ENCODE measurements at regions of chr2 and their contacts with region 1.

Region 1: DNA sequence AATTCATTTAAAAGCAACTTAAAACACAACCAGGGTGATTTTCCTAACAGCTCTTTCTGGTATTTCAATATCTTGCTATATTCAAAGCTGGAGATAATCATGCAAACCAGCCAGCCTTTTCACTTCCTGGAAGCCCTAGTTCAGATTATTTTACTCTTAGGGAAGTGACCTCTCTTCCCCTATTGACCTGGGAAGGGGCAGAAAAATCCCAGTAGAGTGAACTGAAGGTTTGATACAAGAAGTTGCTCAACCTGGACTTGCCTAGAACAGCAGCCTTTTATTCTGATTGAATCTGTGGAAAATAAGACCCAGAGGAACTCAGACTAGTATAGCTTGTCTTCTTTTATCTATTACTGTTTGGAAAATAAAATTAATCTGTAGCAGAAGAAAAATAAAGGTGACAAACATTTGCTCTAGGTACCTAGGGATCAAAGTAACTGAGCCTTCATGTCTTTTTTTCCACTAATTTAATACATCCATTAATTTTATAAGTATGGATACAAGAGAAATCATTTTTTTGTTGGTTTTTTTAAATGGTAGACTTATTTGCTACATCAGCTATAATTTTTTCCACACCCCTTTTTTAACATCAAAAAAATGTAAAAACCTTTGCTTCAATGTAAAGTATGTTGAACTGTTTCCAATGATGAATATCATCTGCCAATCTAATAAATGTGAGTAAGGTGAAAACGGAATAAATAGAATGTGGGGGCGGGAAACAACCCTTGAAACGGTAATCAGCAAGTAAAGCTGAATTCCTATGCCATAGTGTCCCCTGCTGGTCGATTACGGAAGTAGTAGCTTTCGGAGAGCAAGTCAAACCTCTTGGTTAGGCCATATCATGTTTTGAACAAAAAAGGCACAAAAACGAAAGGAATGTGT is 629.9 kb downstream of the NRXN1 start:
- DNase-seq: peak; percentile 17
- CTCF ChIP-seq: peak; percentile 70

Region 2: DNA sequence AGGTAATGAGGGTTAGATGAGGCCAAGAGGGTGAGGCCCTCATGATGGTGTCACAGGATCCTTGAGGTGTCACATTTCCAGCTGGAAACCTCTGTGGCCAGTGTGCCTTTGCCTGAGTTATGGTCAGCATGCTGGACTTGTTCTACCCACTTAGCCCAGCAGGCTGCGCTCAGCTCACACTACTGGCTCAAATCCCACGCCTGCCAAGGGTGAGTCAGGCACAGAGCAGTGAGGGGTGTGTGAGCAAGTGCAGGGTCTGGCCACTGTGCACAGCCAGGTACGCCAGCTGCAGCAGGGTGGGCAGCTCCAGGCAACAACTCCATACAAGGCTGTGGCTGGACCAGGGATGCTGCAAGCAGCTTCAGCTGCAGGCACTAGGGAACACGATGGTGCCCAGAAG is 631.1 kb before region 1 on chr2:
- CTCF ChIA-PET with region 1: interaction called, 19 read pairs
- POLR2A ChIA-PET with region 1: no interaction called
- DNase-seq: peak; percentile 15
- CTCF ChIP-seq: peak; percentile 44

Region 3: DNA sequence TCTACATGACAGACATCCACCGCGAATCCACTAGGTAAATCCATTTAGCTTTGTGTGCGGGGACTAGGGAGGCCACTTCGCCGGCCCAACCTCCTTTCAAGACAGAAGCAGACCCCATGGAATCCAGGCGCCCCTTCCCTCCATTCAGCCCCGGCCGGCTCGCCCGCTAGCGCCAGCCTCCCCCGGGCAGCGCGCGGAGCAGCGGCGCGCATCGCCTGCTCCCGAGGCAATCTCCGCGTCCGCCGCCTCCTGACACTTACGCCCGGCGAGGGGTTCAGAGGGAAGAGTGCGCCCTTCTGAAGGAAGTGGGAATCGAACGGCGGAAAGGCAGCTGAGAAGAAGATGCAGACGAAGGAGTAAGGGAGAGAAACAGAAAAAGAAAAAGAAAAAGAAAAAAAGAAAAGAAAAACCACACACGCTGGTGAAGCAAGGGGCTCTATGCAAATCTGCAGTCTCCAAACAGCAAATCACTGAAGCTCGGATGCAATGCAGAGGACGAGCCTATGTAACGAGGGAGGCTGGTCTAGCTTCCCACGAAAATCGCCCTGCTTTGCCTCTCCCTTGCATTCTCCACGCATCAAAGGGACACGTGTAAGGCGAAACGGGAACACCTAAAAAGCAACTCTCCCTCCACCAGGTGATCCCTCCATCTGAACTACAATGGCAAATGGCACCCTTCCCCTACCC is 54.5 kb before region 1 on chr2:
- CTCF ChIA-PET with region 1: no interaction called
- POLR2A ChIA-PET with region 1: no interaction called
- DNase-seq: no peak
- CTCF ChIP-seq: no peak